ENCODE measurements at regions of chr7 and their contacts with region 1.

Region 1: GRCh38 chr7:149125863-149126661 is at the start of gene ZNF425:
- DNase-seq: peak; percentile 93 to 97
- ATAC-seq: peak; percentile 95 to 99 (median 98)
- H3K4me3 ChIP-seq: peak within 1 kb of the TSS; percentile 91
- H3K27ac ChIP-seq: peak within 1 kb of the TSS; percentile 92
- H3K4me1 ChIP-seq: peaks cover 11% of the 10 kb centered on the region
- H3K27me3 ChIP-seq: no peaks in the 10 kb centered on the region
- CTCF ChIP-seq: peak; percentile 93
- total RNA-seq, gene ZNF425: 0.76 to 1.9 (median 1.7) TPM

Region 2: GRCh38 chr7:148590471-148590870 is 535.6 kb before region 1 on chr7 and contains the start of gene C7orf33:
- intact Hi-C with region 1: no loop called
- DNase-seq: no peak
- ATAC-seq: no peak
- H3K4me3 ChIP-seq: no peak within 1 kb of the TSS
- H3K27ac ChIP-seq: no peak within 1 kb of the TSS
- H3K4me1 ChIP-seq: no peaks in the 10 kb centered on the region
- H3K27me3 ChIP-seq: peaks cover 0 to 9% (median 2%) of the 10 kb centered on the region in 3 donors
- CTCF ChIP-seq: no peak
- total RNA-seq, gene C7orf33: not detected

Region 3: DNA sequence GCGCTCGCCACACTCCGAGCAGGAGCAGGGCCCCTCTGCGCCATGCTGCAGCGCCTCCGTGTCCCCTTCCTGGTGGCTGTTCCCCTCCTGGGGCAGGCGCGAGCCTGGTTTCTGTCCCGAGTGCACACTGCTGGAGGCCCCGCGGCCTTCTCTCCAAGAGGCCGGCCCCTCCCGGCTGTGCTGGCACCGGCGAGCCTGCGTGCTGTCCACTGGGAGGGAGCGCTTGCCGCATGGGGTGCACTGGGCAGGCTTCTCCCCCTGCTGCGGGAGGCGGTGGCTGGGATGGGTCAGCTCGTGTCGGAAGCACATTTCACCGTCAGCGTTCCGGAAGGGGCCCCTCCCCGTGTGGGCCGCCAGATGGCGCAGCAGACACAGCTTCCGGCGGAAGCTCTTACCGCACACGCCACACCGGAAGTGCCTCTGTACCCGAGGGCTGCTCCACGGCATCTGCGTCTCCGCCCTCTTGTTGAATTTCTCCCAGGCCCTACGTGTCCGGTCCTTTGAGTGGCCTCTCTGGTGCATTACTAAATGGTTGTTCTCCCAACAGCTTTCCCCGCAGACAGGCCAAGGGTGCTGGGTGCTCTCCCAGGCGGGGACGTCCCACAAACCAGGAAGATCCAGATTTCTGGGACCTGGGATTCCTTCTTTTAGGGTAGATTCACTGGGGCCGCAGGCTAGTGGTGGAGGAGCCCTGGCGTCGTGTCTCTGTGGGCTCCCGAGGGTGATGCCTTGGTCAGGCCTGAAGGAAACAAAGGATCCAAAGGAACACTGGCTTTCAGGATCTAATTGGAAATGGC is 54.2 kb before region 1 on chr7:
- intact Hi-C with region 1: no loop called
- DNase-seq: peak; percentile 27 to 69
- ATAC-seq: peak in 3 of 4 donors; percentile 57 to 74 (median 67)
- H3K4me3 ChIP-seq: no peak overlapping the region
- H3K27ac ChIP-seq: no peak overlapping the region
- H3K4me1 ChIP-seq: no peaks in the 10 kb centered on the region
- H3K27me3 ChIP-seq: no peaks in the 10 kb centered on the region
- CTCF ChIP-seq: no peak

Region 4: GRCh38 chr7:149147072-149147751 is 21.1 kb after region 1 on chr7 and contains the start of gene ZNF398:
- intact Hi-C with region 1: loop called in 1 of 2 experiments (anchors 2 kb)
- DNase-seq: peak; percentile 81 to 89
- ATAC-seq: peak; percentile 89 to 94 (median 92)
- H3K4me3 ChIP-seq: peak within 1 kb of the TSS; percentile 98
- H3K27ac ChIP-seq: peak within 1 kb of the TSS; percentile 94
- H3K4me1 ChIP-seq: peaks cover 21% of the 10 kb centered on the region
- H3K27me3 ChIP-seq: no peaks in the 10 kb centered on the region
- CTCF ChIP-seq: peak; percentile 92
- total RNA-seq, gene ZNF398: 7.8 to 12.4 (median 8.6) TPM